ENCODE measurements at regions of chr15 and their contacts with region 1.

Region 1: DNA sequence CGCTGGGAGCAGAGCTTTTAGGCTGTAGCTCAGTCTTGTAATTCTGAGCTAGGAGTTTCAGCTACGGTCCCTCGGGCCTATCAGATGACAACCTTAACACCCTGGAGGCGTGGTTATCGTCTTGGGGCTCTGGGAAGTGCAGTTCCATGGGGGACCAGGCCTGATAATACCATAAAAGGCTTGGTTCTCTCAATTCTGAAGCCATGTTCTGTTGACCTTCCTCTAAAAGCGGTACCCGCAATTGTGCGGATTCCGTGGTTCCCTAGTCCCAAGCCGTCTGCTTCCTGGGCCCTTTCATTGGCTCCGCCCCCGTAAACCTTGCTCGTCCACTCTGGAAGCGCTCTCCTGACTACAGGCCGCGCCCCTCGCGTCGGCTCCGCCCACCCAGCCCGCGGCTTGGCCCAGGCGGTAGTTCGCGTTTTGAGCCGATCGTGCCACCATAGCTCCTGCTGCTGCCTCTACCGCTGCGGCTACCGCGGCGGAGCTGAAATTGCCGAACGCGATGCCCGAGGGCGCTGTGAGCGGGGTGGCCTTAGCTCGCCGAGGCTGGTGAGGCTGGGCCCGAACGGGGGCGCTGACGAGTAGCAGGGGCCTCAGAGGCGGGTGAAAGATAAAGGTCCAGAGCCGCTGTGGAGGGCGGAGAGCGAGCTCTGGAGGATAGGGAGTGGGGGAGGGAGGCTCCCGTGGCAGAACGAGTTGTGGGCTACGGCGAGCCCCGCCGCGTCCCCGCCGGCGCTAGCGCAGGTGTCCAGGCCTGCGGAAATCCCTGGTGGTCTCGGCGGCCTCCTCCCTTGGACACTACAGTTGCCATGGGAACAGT is at the start of gene MAPKBP1:
- DNase-seq: peak; percentile 99
- ATAC-seq: peak; percentile 91
- H3K4me3 ChIP-seq: peak within 1 kb of the TSS; percentile 75 to 87 (median 78)
- H3K4me3 Mint-ChIP-seq: peak within 1 kb of the TSS; percentile 99
- H3K27ac ChIP-seq: peak within 1 kb of the TSS; percentile 62 to 71
- H3K27ac Mint-ChIP-seq: peak within 1 kb of the TSS; percentile 96
- H3K4me1 ChIP-seq: peaks cover 30 to 32% of the 10 kb centered on the region in 2 donors
- H3K4me1 Mint-ChIP-seq: peaks cover 57% of the 10 kb centered on the region
- H3K27me3 ChIP-seq: no peaks in the 10 kb centered on the region
- H3K27me3 Mint-ChIP-seq: no peaks in the 10 kb centered on the region
- CTCF ChIP-seq: peak; percentile 83
- total RNA-seq, gene MAPKBP1: 59.2 and 65.5 TPM in 2 replicates

Region 2: DNA sequence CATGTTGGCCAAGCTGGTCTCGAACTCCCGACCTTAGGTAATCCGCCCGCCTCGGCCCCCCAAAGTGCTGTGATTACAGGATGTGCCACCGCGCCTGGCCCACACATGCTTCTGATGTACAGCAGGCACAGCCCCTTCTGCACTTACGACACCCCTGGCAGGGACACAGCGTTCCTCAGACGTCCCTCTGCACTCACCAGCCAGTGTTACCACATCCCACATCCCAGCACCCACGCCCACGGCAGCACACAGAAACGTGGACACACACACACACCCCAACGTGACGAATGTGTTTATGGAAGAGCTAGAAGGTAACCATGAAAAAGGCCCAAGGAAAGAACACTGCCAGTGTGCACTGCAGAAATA is 229.6 kb before region 1 on chr15:
- CTCF ChIA-PET with region 1: interaction called, 3 read pairs
- POLR2A ChIA-PET with region 1: no interaction called
- intact Hi-C with region 1: loop called (anchors 1 kb)
- DNase-seq: no peak
- ATAC-seq: no peak
- H3K4me3 ChIP-seq: peak overlapping the region in 4 of 5 experiments; percentile 69 to 92 (median 84)
- H3K4me3 Mint-ChIP-seq: peak overlapping the region; percentile 97
- H3K27ac ChIP-seq: no peak overlapping the region
- H3K27ac Mint-ChIP-seq: peak overlapping the region; percentile 42
- H3K4me1 ChIP-seq: peaks cover 6 to 11% of the 10 kb centered on the region in 2 donors
- H3K4me1 Mint-ChIP-seq: peaks cover 10% of the 10 kb centered on the region
- H3K27me3 ChIP-seq: no peaks in the 10 kb centered on the region
- H3K27me3 Mint-ChIP-seq: no peaks in the 10 kb centered on the region
- CTCF ChIP-seq: no peak

Region 3: DNA sequence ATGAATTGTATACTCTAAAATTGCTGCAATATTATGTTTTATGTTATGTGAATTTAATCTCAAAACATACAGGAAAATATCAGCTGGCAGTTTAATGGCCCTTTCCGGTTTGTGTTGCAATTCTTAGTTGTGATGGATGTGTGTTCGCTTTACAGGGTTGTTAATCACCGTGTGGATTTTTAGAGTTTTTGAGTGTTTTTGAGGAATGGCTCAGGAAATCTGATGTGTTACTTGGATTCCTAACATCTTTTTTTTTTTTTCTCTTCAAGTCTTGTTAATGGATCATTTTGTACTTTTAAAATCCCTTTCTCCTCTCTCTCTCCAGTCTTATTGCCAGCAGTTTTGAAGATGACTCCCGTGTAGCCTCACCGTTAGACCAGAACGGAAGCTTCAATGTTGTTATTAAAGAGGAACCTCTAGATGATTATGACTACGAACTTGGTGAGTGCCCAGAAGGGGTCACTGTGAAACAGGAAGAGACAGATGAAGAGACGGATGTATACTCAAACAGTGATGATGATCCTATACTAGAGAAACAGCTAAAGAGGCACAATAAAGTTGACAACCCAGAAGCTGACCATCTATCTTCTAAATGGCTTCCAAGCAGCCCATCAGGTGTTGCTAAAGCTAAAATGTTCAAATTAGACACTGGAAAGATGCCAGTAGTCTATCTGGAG is 78.4 kb before region 1 on chr15:
- CTCF ChIA-PET with region 1: interaction called, 18 read pairs
- POLR2A ChIA-PET with region 1: no interaction called
- intact Hi-C with region 1: loop called (anchors 5 kb)
- DNase-seq: peak; percentile 80
- ATAC-seq: peak; percentile 99
- H3K4me3 ChIP-seq: peak overlapping the region in 2 of 5 experiments; percentile 19 to 21
- H3K4me3 Mint-ChIP-seq: peak overlapping the region; percentile 35
- H3K27ac ChIP-seq: peak overlapping the region; percentile 52 to 77
- H3K27ac Mint-ChIP-seq: peak overlapping the region; percentile 51
- H3K4me1 ChIP-seq: peaks cover 12 to 28% of the 10 kb centered on the region in 2 donors
- H3K4me1 Mint-ChIP-seq: peaks cover 45% of the 10 kb centered on the region
- H3K27me3 ChIP-seq: no peaks in the 10 kb centered on the region
- H3K27me3 Mint-ChIP-seq: no peaks in the 10 kb centered on the region
- CTCF ChIP-seq: peak; percentile 66

Region 4: DNA sequence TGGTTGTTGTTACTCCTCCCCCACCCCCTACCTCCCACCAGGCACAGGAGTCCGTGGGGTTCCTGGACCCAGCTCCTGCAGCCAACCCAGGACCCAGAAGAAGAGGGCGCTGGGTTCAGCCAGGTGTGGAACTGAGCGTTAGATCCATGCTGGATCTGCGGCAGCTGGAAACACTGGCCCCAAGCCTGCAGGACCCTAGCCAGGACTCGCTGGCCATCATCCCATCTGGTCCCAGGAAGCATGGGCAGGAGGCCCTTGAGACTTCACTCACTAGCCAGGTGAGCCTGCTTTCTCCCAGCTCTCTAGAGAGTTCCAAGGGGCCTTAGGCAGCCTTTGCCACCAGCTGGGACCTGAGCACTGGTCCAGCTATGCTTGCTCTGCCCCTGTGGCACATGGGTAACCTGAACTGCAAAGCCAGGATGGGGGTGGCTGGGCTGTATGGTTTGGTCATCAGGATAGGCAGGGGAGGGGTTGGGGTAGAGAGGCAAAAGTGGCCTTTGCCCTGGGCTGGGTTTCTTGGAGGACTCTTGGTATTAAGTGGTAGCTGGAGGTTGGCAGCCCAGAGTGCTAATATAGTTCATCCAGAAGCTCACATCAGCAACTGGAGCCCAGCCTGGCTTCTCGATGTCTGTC is 46.6 kb after region 1 on chr15:
- CTCF ChIA-PET with region 1: interaction called, 38 read pairs
- POLR2A ChIA-PET with region 1: interaction called, 4 read pairs
- intact Hi-C with region 1: no loop called
- DNase-seq: no peak
- ATAC-seq: no peak
- H3K4me3 ChIP-seq: no peak overlapping the region
- H3K4me3 Mint-ChIP-seq: no peak overlapping the region
- H3K27ac ChIP-seq: no peak overlapping the region
- H3K27ac Mint-ChIP-seq: no peak overlapping the region
- H3K4me1 ChIP-seq: no peaks in the 10 kb centered on the region
- H3K4me1 Mint-ChIP-seq: no peaks in the 10 kb centered on the region
- H3K27me3 ChIP-seq: no peaks in the 10 kb centered on the region
- H3K27me3 Mint-ChIP-seq: no peaks in the 10 kb centered on the region
- CTCF ChIP-seq: no peak

Region 5: GRCh38 chr15:41904541-41905005 is 130.3 kb after region 1 on chr15:
- CTCF ChIA-PET with region 1: interaction called, 257 read pairs
- POLR2A ChIA-PET with region 1: no interaction called
- intact Hi-C with region 1: loop called (anchors 1 kb)
- DNase-seq: peak; percentile 82
- ATAC-seq: peak; percentile 92
- H3K4me3 ChIP-seq: no peak overlapping the region
- H3K4me3 Mint-ChIP-seq: no peak overlapping the region
- H3K27ac ChIP-seq: no peak overlapping the region
- H3K27ac Mint-ChIP-seq: peak overlapping the region; percentile 41
- H3K4me1 ChIP-seq: peaks cover 0 to 4% of the 10 kb centered on the region in 2 donors
- H3K4me1 Mint-ChIP-seq: peaks cover 6% of the 10 kb centered on the region
- H3K27me3 ChIP-seq: no peaks in the 10 kb centered on the region
- H3K27me3 Mint-ChIP-seq: no peaks in the 10 kb centered on the region
- CTCF ChIP-seq: peak; percentile 89

Region 6: DNA sequence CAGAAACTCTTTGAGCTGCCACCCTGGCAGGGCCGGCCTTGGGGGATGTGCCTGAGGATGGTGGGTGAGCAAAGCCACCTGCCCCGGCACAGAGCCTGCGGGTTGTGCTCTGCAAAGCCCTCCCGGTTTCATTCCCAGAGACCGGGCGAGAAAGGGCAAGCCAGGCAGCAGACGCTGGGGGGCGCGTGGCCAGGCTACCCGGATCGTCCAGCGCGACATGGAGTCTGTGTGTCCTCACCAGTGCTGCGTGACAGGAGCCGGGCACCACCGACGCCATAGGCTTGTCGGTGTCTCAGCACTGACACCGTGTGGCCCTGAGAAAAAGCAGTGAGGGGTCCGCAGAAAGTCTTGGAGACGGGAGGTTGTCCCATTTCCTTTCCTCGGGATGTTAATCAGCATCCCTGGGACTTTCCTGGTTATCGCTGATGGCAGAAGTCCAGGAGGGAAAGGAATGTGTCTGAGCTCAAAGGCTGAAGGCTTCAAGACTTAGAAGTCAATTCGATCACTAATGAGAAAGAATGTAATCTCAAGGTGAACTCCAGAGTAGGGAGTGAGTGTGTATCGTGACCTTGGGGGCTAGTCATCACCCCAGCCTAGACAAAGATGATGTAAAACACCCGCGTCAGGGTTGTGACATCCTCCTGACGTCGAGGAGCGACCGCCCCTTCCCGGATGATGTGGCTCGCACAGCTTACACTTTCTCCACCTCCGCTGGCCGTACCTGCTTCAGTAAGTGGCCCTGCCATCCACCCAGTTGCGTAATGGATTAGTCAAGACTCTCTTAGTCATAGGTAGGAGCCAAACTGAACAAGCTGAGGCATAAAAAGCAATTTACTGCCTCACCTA is 282.9 kb after region 1 on chr15:
- CTCF ChIA-PET with region 1: interaction called, 4 read pairs
- POLR2A ChIA-PET with region 1: no interaction called
- intact Hi-C with region 1: loop called (anchors 1 kb)
- DNase-seq: peak; percentile 58
- ATAC-seq: peak; percentile 68
- H3K4me3 ChIP-seq: peak overlapping the region in 4 of 5 experiments; percentile 15 to 39 (median 28)
- H3K4me3 Mint-ChIP-seq: peak overlapping the region; percentile 4
- H3K27ac ChIP-seq: no peak overlapping the region
- H3K27ac Mint-ChIP-seq: no peak overlapping the region
- H3K4me1 ChIP-seq: peaks cover 7% of the 10 kb centered on the region in 2 donors
- H3K4me1 Mint-ChIP-seq: peaks cover 9% of the 10 kb centered on the region
- H3K27me3 ChIP-seq: peaks cover 0 to 26% (median 13%) of the 10 kb centered on the region in 4 experiments
- H3K27me3 Mint-ChIP-seq: peaks cover 31% of the 10 kb centered on the region
- CTCF ChIP-seq: peak; percentile 20

Measured in B cell (primary cell).